ENCODE measurements at regions of chr2 and their contacts with region 1.

Region 1: GRCh38 chr2:174634130-174635014 is 36.8 kb upstream of the WIPF1 start:
- DNase-seq: peak in 8 of 9 experiments; percentile 14 to 83 (median 51)
- ATAC-seq: peak; percentile 74
- H3K4me3 ChIP-seq: peak overlapping the region; percentile 70 to 71
- H3K4me3 Mint-ChIP-seq: peak overlapping the region; percentile 95
- H3K27ac ChIP-seq: peak overlapping the region; percentile 49 to 90
- H3K27ac Mint-ChIP-seq: peak overlapping the region; percentile 98
- H3K4me1 ChIP-seq: peaks cover 46% of the 10 kb centered on the region
- H3K4me1 Mint-ChIP-seq: peaks cover 71% of the 10 kb centered on the region
- H3K27me3 ChIP-seq: no peaks in the 10 kb centered on the region
- H3K27me3 Mint-ChIP-seq: no peaks in the 10 kb centered on the region
- CTCF ChIP-seq: no peak

Region 2: GRCh38 chr2:174682578-174683391 is 48.4 kb after region 1 on chr2:
- CTCF ChIA-PET with region 1: interaction called, 35 read pairs
- POLR2A ChIA-PET with region 1: interaction called, 5 read pairs
- intact Hi-C with region 1: loop called (anchors 1 to 2 kb)
- DNase-seq: peak; percentile 33 to 83 (median 67)
- ATAC-seq: peak; percentile 74
- H3K4me3 ChIP-seq: peak overlapping the region; percentile 73 to 81
- H3K4me3 Mint-ChIP-seq: peak overlapping the region; percentile 91
- H3K27ac ChIP-seq: peak overlapping the region; percentile 41 to 70
- H3K27ac Mint-ChIP-seq: peak overlapping the region; percentile 93
- H3K4me1 ChIP-seq: peaks cover 35% of the 10 kb centered on the region
- H3K4me1 Mint-ChIP-seq: peaks cover 55% of the 10 kb centered on the region
- H3K27me3 ChIP-seq: no peaks in the 10 kb centered on the region
- H3K27me3 Mint-ChIP-seq: no peaks in the 10 kb centered on the region
- CTCF ChIP-seq: no peak

Measured in CD8-positive, alpha-beta T cell (primary cell).